Natural killer cell (primary cell): ENCODE measurements at regions of chr7 and their contacts with region 1.

Region 1: GRCh38 chr7:51162724-51163329 is 153.8 kb downstream of the COBL start:
- DNase-seq: peak; percentile 28 to 74
- ATAC-seq: peak in 2 of 3 donors; percentile 44 to 78
- H3K4me3 ChIP-seq: no peak overlapping the region
- H3K4me3 Mint-ChIP-seq: no peak overlapping the region
- H3K27ac ChIP-seq: no peak overlapping the region
- H3K27ac Mint-ChIP-seq: no peak overlapping the region
- H3K4me1 ChIP-seq: no peaks in the 10 kb centered on the region
- H3K4me1 Mint-ChIP-seq: peaks cover 0 to 9% of the 10 kb centered on the region in 2 donors
- H3K27me3 ChIP-seq: peaks cover 6% of the 10 kb centered on the region
- H3K27me3 Mint-ChIP-seq: peaks cover 26 to 35% of the 10 kb centered on the region in 2 donors
- CTCF ChIP-seq: peak; percentile 68

Region 2: DNA sequence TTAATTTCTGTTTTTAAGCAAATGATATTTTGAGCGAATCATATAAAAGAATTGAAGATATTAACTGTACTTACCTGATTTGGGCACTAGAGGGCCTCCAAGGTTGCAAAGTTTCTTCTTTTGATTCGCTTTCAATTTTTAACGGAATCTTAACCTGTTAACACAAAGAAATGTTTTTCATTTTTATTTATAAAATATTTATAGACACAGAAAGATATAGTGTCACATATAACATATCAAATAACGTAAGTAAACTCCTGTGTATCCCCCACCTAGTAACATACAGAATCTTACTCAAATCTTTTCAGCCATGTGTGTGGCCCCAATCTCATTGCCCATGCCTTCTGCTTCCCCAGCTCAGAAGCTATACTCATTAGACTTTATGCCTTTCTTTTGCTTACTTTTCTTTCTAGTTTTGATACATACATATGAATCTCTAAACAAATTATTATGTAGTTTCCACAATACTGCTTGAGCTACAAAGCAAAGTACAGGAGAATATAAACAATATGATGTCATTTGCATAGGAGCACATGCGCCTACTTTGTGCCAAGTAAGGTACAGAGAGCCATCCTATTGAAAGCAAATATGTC is 1020.3 kb before region 1 on chr7:
- intact Hi-C with region 1: loop called (anchors 2 kb)
- DNase-seq: peak in 1 of 2 donors; percentile 84
- ATAC-seq: peak; percentile 67 to 73 (median 70)
- H3K4me3 ChIP-seq: no peak overlapping the region
- H3K4me3 Mint-ChIP-seq: no peak overlapping the region
- H3K27ac ChIP-seq: no peak overlapping the region
- H3K27ac Mint-ChIP-seq: no peak overlapping the region
- H3K4me1 ChIP-seq: peaks cover 3% of the 10 kb centered on the region
- H3K4me1 Mint-ChIP-seq: peaks cover 4% of the 10 kb centered on the region in 2 donors
- H3K27me3 ChIP-seq: no peaks in the 10 kb centered on the region
- H3K27me3 Mint-ChIP-seq: peaks cover 8 to 14% of the 10 kb centered on the region in 2 donors
- CTCF ChIP-seq: peak; percentile 87

Region 3: DNA sequence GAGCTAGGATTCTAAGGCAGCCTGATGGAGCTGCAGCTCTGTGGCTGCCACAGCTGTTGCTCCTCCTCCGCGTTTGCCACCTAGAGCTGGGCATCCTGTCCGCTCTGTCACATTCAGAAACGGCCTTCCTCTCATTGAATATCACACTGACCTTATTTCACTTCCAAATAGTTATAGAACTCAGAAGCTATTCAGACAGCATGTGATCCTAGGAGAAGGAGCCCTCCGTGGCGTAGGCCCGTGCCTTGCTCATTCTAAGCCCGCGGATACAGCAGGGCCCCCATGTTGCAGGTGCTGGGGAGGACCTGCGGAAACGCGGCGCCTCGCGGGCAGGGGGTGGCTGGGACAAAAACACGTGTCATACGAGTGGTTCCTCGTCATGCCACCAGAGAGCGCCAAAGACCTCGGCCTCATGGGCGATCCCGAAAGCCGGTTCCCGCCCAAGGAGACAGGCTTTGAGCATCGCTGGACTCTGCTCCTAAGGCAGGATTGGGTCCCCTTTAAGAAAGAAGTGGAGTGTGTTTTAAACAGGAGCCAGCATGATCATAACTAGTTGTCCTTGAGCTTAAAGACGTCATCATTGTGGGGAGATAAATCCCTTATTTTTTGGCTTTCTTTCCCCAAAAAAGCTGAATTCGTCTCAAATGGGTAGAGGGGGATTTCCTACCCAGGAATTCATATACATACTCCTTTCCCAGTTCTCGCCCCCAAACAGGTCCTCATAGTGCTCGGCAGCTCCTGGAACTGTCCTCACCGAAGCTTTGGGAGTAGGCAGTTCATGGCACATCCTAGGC is 694.8 kb before region 1 on chr7:
- intact Hi-C with region 1: loop called (anchors 1 kb)
- DNase-seq: peak; percentile 66 to 89
- ATAC-seq: peak; percentile 87 to 98 (median 97)
- H3K4me3 ChIP-seq: no peak overlapping the region
- H3K4me3 Mint-ChIP-seq: no peak overlapping the region
- H3K27ac ChIP-seq: no peak overlapping the region
- H3K27ac Mint-ChIP-seq: peak overlapping the region in 1 of 2 donors; percentile 42
- H3K4me1 ChIP-seq: peaks cover 9% of the 10 kb centered on the region
- H3K4me1 Mint-ChIP-seq: peaks cover 0 to 11% of the 10 kb centered on the region in 2 donors
- H3K27me3 ChIP-seq: no peaks in the 10 kb centered on the region
- H3K27me3 Mint-ChIP-seq: peaks cover 10 to 12% of the 10 kb centered on the region in 2 donors
- CTCF ChIP-seq: peak; percentile 85

Region 4: GRCh38 chr7:50614721-50615518 is 547.9 kb before region 1 on chr7:
- intact Hi-C with region 1: loop called (anchors 2 kb)
- DNase-seq: peak in 1 of 2 donors; percentile 47
- ATAC-seq: peak in 2 of 3 donors; percentile 41 to 50
- H3K4me3 ChIP-seq: no peak overlapping the region
- H3K4me3 Mint-ChIP-seq: no peak overlapping the region
- H3K27ac ChIP-seq: no peak overlapping the region
- H3K27ac Mint-ChIP-seq: peak overlapping the region in 1 of 2 donors; percentile 70
- H3K4me1 ChIP-seq: peaks cover 24% of the 10 kb centered on the region
- H3K4me1 Mint-ChIP-seq: peaks cover 41 to 46% of the 10 kb centered on the region in 2 donors
- H3K27me3 ChIP-seq: no peaks in the 10 kb centered on the region
- H3K27me3 Mint-ChIP-seq: peaks cover 3 to 5% of the 10 kb centered on the region in 2 donors
- CTCF ChIP-seq: peak; percentile 20

Region 5: DNA sequence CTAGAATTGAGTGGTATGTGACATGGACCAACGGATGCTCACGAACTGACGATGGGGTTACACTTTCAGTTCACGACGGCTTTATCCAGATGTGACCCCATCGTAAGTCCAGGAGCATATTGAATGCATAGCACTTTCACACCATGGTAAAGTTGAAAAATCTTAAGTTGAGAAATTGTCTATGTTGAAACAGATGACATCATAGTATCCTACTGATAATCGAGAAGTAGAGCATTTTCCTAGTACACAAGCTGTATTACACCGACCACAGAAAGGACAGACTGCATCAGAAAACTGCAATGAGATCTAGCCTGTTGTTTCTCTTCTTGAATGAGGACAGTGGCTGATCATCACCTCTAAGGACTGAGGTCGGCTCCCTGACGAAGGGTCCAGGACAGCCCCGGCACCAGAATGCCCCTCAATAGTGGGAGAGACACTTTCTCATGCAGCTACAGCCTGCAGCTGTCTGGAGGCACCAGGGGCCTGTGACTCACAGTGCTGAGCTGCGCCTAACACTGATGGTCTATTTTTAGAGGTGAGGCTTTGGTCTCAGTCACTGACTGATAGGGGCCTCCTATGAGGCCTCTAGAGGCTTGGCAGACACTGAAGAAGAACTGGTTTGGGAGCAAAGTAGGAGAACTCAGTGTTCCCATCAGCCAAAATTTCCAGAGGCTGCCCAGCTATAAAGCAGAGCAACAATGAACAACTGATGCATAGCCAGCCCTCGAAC is 23.5 kb after region 1 on chr7:
- intact Hi-C with region 1: no loop called
- DNase-seq: no peak
- ATAC-seq: no peak
- H3K4me3 ChIP-seq: no peak overlapping the region
- H3K4me3 Mint-ChIP-seq: no peak overlapping the region
- H3K27ac ChIP-seq: no peak overlapping the region
- H3K27ac Mint-ChIP-seq: no peak overlapping the region
- H3K4me1 ChIP-seq: peaks cover 8% of the 10 kb centered on the region
- H3K4me1 Mint-ChIP-seq: peaks cover 0 to 9% of the 10 kb centered on the region in 2 donors
- H3K27me3 ChIP-seq: no peaks in the 10 kb centered on the region
- H3K27me3 Mint-ChIP-seq: peaks cover 0 to 33% of the 10 kb centered on the region in 2 donors
- CTCF ChIP-seq: no peak

Region 6: DNA sequence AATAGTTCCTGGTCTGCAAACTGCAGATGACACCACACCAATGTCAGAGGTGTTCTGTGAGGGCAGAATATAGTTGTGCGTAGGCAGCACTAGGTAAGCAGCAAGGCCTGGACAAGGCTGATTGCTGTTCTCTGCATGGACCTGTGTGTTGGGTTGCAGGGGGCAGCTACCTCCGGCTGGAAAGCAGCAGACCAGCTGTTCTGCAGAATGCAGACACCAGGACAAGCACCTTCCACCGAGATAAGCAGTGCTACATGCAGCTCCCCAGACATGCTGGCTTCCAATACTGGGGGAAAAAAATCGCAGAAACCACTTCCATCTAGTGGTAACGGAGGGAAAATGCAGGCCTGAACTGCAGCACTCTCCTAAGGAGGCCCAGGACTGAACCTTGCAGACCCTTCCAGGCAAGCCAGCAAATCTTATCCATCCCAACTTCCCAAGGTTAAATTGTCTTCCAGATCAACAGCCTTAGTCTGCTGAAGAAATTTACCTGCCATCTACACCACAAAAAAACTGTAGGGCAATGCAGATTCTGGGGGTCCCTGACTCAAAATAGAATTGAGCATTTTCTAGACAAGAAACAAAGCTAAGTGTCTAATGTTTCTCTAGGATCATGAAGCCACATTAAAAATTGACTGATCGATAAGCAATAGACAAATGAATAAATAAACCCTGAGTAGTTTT is 204.2 kb after region 1 on chr7:
- intact Hi-C with region 1: loop called (anchors 2 kb)
- DNase-seq: peak in 1 of 2 donors; percentile 12
- ATAC-seq: peak in 1 of 3 donors; percentile 28
- H3K4me3 ChIP-seq: no peak overlapping the region
- H3K4me3 Mint-ChIP-seq: no peak overlapping the region
- H3K27ac ChIP-seq: no peak overlapping the region
- H3K27ac Mint-ChIP-seq: no peak overlapping the region
- H3K4me1 ChIP-seq: no peaks in the 10 kb centered on the region
- H3K4me1 Mint-ChIP-seq: peaks cover 0 to 5% of the 10 kb centered on the region in 2 donors
- H3K27me3 ChIP-seq: no peaks in the 10 kb centered on the region
- H3K27me3 Mint-ChIP-seq: peaks cover 0 to 4% of the 10 kb centered on the region in 2 donors
- CTCF ChIP-seq: no peak